B cell (primary cell): ENCODE measurements at regions of chr19 and their contacts with region 1.

Region 1: GRCh38 chr19:13093407-13094105 is 9.1 kb downstream of the LYL1 start:
- DNase-seq: peak; percentile 91
- ATAC-seq: peak; percentile 40
- H3K4me3 ChIP-seq: no peak overlapping the region
- H3K4me3 Mint-ChIP-seq: peak overlapping the region; percentile 93
- H3K27ac ChIP-seq: peak overlapping the region in 1 of 2 donors; percentile 87
- H3K27ac Mint-ChIP-seq: peak overlapping the region; percentile 93
- H3K4me1 ChIP-seq: peaks cover 12 to 33% of the 10 kb centered on the region in 2 donors
- H3K4me1 Mint-ChIP-seq: peaks cover 28% of the 10 kb centered on the region
- H3K27me3 ChIP-seq: no peaks in the 10 kb centered on the region
- H3K27me3 Mint-ChIP-seq: no peaks in the 10 kb centered on the region
- CTCF ChIP-seq: peak; percentile 91

Region 2: GRCh38 chr19:12983542-12984142 is 109.9 kb before region 1 on chr19:
- CTCF ChIA-PET with region 1: interaction called, 285 read pairs
- POLR2A ChIA-PET with region 1: interaction called, 13 read pairs
- intact Hi-C with region 1: loop called (anchors 1 kb)
- DNase-seq: peak; percentile 93
- ATAC-seq: peak; percentile 77
- H3K4me3 ChIP-seq: peak overlapping the region in 4 of 5 experiments; percentile 24 to 62 (median 36)
- H3K4me3 Mint-ChIP-seq: no peak overlapping the region
- H3K27ac ChIP-seq: no peak overlapping the region
- H3K27ac Mint-ChIP-seq: no peak overlapping the region
- H3K4me1 ChIP-seq: peaks cover 30 to 43% of the 10 kb centered on the region in 2 donors
- H3K4me1 Mint-ChIP-seq: peaks cover 15% of the 10 kb centered on the region
- H3K27me3 ChIP-seq: peaks cover 0 to 10% (median 2%) of the 10 kb centered on the region in 4 experiments
- H3K27me3 Mint-ChIP-seq: peaks cover 4% of the 10 kb centered on the region
- CTCF ChIP-seq: peak; percentile 91

Region 3: DNA sequence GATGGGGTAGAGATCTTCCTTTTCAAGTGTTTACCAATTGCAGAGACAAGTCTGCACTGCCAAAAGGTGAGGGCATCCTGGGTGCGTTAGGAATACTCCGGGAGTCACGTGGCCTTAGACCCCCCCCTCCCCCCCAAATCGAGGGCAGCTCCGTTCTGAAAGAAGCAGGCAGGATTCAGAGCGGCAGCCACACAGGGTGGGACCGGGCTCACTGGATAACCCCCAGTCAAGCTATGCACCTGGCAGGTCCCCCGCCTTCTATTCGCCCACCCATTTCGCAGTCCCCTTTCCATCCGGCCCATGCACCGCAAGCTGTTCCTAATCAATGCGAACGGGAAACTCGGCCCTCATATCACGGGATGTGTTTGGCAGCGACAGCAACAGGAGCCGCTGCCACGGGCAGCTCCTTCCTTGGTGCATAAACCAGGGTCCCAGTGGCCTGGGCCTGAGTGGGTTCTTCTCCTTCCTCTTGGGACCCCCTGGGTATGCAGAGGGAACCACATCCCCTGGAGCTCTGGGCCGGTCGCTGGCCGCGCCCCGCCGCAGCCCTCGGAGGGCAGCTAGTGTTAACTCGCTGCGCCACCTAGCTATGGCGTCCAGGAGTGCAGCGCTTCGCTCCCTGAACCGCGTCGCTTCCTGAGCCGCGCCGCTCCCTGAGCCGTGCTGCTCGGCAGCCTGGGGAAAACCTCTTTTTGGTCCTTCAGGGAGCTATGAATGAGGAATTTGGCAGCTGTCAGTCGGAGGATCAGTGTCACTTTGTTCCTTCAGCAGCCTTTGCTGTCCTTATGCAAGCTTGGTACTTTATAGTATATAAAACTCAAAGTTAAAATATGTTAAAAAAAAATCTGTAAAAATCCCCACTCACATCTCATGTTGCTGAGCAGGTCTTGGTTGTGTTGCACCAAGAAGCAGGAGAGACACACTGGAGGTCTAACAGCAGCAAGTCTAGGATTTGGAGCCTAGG is 32.3 kb before region 1 on chr19:
- CTCF ChIA-PET with region 1: interaction called, 71 read pairs
- POLR2A ChIA-PET with region 1: interaction called, 5 read pairs
- intact Hi-C with region 1: loop called (anchors 1 kb)
- DNase-seq: peak; percentile 86
- ATAC-seq: peak; percentile 97
- H3K4me3 ChIP-seq: peak overlapping the region; percentile 4 to 60 (median 57)
- H3K4me3 Mint-ChIP-seq: peak overlapping the region; percentile 88
- H3K27ac ChIP-seq: no peak overlapping the region
- H3K27ac Mint-ChIP-seq: peak overlapping the region; percentile 32
- H3K4me1 ChIP-seq: peaks cover 7 to 17% of the 10 kb centered on the region in 2 donors
- H3K4me1 Mint-ChIP-seq: peaks cover 6% of the 10 kb centered on the region
- H3K27me3 ChIP-seq: peaks cover 0 to 22% (median 12%) of the 10 kb centered on the region in 4 experiments
- H3K27me3 Mint-ChIP-seq: peaks cover 21% of the 10 kb centered on the region
- CTCF ChIP-seq: peak; percentile 99

Region 4: GRCh38 chr19:13150187-13150930 is 56.8 kb after region 1 on chr19 and contains the starts of genes IER2 and STX10:
- CTCF ChIA-PET with region 1: interaction called, 8 read pairs
- POLR2A ChIA-PET with region 1: interaction called, 41 read pairs
- intact Hi-C with region 1: no loop called
- DNase-seq: peak; percentile 96
- ATAC-seq: peak; percentile 53
- H3K4me3 ChIP-seq: peak within 1 kb of the TSS; percentile 82 to 100 (median 98)
- H3K4me3 Mint-ChIP-seq: peak within 1 kb of the TSS; percentile 92
- H3K27ac ChIP-seq: peak within 1 kb of the TSS; percentile 87 to 96
- H3K27ac Mint-ChIP-seq: peak within 1 kb of the TSS; percentile 94
- H3K4me1 ChIP-seq: peaks cover 9 to 32% of the 10 kb centered on the region in 2 donors
- H3K4me1 Mint-ChIP-seq: peaks cover 33% of the 10 kb centered on the region
- H3K27me3 ChIP-seq: no peaks in the 10 kb centered on the region
- H3K27me3 Mint-ChIP-seq: no peaks in the 10 kb centered on the region
- CTCF ChIP-seq: peak; percentile 66
- total RNA-seq, gene IER2: 181 and 189 TPM in 2 replicates
- total RNA-seq, gene STX10: 48.4 and 59.0 TPM in 2 replicates

Region 5: DNA sequence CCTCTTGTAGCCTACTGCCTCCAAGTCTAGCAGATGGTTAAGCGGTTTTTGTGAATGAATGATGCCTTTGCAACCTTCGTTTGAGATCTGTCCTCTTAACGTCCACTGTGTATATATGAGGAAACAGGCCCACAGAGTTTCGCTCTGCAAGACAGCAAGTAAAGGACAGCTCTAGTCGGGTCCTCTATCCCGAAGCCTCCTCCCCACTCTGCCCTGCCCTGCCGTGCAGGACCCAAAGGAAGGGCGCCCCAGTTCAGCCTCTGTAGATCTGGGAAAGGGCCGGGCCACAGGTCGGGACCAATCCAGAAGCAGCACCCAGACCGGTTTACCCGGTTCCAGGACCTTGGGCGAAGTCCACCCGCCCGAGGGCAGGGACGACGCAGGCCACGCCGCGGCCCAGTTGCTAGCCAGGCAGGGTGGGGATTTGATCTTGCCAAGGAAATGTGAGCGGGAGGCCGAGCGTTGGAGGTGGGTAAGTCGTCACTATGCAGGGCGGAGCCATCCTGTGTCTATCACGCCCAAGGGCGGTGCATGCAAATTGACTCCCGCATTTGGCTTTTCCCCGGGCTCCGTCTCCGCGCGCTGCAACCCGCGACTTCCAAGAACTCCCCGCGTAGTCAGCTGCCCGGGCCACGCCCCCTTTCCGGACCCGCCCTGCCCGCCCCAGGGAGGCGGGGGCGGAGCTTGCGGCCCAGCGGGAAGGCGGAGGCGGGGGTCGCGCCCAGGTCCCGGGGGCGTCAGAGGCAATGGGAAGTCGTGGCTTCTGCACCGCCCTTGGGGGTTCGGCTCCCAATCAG is 69.2 kb after region 1 on chr19:
- CTCF ChIA-PET with region 1: interaction called, 8 read pairs
- POLR2A ChIA-PET with region 1: interaction called, 26 read pairs
- intact Hi-C with region 1: no loop called
- DNase-seq: peak; percentile 85
- ATAC-seq: peak; percentile 42
- H3K4me3 ChIP-seq: peak overlapping the region; percentile 24 to 71 (median 61)
- H3K4me3 Mint-ChIP-seq: peak overlapping the region; percentile 92
- H3K27ac ChIP-seq: peak overlapping the region; percentile 85 to 94
- H3K27ac Mint-ChIP-seq: peak overlapping the region; percentile 97
- H3K4me1 ChIP-seq: peaks cover 84 to 96% of the 10 kb centered on the region in 2 donors
- H3K4me1 Mint-ChIP-seq: peaks cover 62% of the 10 kb centered on the region
- H3K27me3 ChIP-seq: no peaks in the 10 kb centered on the region
- H3K27me3 Mint-ChIP-seq: no peaks in the 10 kb centered on the region
- CTCF ChIP-seq: no peak